AG04449 (cell line): ENCODE measurements at regions of chr6 and their contacts with region 1.

Region 1: DNA sequence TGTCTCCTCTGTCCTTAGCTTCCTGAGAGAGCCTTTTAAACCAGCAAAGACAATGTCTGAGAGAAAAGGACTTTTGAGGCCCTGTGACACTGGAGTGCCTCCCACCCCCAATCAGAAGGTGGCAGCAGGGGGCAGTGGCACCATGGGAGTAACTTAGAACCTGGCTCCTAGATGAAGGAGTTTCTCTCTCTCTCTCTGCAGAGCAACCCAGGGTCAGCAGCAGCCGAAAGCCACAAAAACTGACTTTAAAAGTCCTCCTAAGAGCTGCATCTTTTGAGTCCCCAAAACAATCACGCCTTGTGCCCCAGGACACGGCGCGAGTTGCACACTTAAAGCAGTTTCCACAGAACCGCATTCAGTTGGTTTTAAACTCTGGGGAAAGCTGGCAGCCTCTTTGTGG is 5.3 kb upstream of the TCP11 start:
- DNase-seq: no peak
- H3K4me3 ChIP-seq: no peak overlapping the region
- CTCF ChIP-seq: peak; percentile 84

Region 2: GRCh38 chr6:35011096-35012041 is 135.1 kb before region 1 on chr6:
- CTCF ChIA-PET with region 1: no interaction called
- POLR2A ChIA-PET with region 1: no interaction called
- DNase-seq: no peak
- H3K4me3 ChIP-seq: no peak overlapping the region
- CTCF ChIP-seq: no peak

Region 3: GRCh38 chr6:35165630-35166071 is 19.2 kb after region 1 on chr6:
- CTCF ChIA-PET with region 1: interaction called, 20 read pairs
- POLR2A ChIA-PET with region 1: no interaction called
- DNase-seq: no peak
- H3K4me3 ChIP-seq: no peak overlapping the region
- CTCF ChIP-seq: no peak

Region 4: GRCh38 chr6:35213824-35214756 is 67.6 kb after region 1 on chr6 and contains the start of gene SCUBE3:
- CTCF ChIA-PET with region 1: interaction called, 179 read pairs
- POLR2A ChIA-PET with region 1: no interaction called
- DNase-seq: no peak
- H3K4me3 ChIP-seq: peak within 1 kb of the TSS; percentile 72
- CTCF ChIP-seq: no peak

Region 5: GRCh38 chr6:35230950-35231349 is 84.5 kb after region 1 on chr6:
- CTCF ChIA-PET with region 1: interaction called, 340 read pairs
- POLR2A ChIA-PET with region 1: no interaction called
- DNase-seq: no peak
- H3K4me3 ChIP-seq: no peak overlapping the region
- CTCF ChIP-seq: no peak